ENCODE measurements at regions of chr6 and their contacts with region 1.

Region 1: DNA sequence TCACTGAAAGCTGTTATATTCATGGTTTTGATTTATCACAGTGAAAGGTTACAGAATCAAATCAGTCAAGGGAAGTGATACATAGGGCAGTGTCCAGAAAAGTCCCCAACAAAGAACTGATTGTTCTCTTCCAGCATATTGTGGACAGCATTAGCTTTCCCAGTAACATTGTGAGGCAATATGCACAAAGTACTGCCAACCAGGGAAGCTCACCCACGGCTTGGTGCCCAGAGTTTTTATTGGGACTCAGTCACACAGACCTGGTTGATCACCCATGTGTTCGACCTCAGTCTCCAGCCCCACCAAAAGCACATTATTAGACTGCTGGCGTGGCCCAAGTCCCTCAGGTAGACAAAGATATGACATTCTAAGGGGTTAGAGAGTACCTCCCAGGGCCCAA is 76.0 kb downstream of the LCA5 start:
- DNase-seq: peak; percentile 86
- H3K4me3 ChIP-seq: no peak overlapping the region
- H3K27ac ChIP-seq: peak overlapping the region; percentile 9
- H3K4me1 ChIP-seq: peaks cover 16% of the 10 kb centered on the region
- H3K27me3 ChIP-seq: no peaks in the 10 kb centered on the region
- CTCF ChIP-seq: no peak

Region 2: DNA sequence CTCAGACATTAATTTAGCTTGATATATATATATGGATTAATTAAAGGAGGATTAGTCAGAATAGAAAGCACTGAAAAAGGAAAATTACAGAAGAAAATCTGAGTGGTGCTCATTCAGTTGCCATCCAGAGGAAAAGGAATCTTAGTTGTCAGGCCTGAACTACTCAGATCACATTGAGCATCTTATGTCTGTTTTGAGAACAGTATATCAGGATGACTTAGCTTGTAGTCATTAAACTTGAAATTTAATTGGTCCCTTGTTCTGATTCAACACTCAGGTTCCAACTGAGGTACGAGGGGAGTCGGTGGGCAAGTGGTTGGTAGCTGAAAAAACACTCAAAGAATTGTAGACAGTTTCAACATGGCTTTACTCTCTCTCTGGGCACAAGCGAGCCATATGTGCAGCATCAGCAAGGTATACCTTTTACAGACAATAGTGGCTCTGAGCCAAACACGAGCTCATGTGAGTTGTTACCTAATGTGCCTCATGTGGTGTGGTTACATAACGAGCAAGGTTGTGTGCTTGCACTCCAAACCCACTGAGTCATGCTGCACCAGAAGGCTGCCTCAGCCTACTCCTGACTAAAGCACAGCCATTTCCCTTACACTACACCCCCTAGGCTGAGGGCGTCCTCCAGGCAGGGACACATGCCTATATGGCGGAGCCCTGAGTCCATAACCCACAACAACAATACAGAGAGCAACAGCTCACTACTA is 153.7 kb before region 1 on chr6:
- CTCF ChIA-PET with region 1: no interaction called
- dilution Hi-C with region 1: no loop called
- in situ Hi-C with region 1: no loop called
- intact Hi-C with region 1: loop called (anchors 5 kb)
- DNase-seq: peak; percentile 95
- H3K4me3 ChIP-seq: no peak overlapping the region
- H3K27ac ChIP-seq: peak overlapping the region; percentile 48
- H3K4me1 ChIP-seq: peaks cover 11% of the 10 kb centered on the region
- H3K27me3 ChIP-seq: no peaks in the 10 kb centered on the region
- CTCF ChIP-seq: no peak